Activated T-helper 1 cell treated with anti-CD3 and anti-CD28 coated beads, Interleukin-12 subunit alpha, Interleukin-12 subunit beta, Interleukin-2, Interleukin-4 antibody, amounts not matched to agents 30 ng/mL and 10 ng/mL and 1 ng/mL, durations not matched to agents 14 hours and 24 hours and 36 hours (primary cell): ENCODE measurements at regions of chr17 and their contacts with region 1.

Region 1: DNA sequence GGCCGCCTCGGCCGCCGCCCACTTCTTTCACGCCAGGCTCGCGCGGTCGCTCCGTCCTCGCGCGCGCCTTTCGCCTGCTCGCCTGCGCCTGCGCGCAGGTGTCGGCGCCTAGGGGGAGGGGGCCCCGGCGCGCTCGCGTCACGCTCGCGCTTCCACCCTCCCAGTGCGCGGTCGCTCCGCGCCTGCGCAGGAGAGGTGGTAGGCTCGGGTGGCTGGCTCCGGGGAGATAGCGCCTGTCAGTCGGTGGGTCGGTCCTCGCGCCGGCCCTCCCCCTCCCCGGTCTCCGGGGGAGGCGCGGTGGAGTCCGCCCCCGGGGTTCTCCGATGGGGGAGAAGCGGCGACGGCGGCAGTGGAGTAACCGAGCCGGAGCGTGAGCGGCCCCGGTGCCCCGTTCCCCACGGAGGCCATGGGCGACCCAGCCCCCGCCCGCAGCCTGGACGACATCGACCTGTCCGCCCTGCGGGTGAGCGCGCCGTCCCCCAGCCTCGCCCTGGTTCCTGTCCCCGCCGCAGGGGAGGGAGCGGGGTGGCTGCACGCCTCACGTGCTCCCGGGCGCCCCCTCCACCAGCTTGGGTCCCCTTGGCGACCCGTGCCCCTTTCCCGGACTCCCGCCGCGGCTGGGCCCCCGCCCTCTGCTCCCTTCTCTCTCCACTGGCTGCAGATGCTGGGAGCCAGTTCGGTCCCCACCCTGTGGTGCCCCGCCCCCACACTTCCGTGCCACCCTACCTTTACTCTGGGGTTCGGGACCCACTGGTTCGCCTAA is at the start of gene MINK1:
- DNase-seq: peak; percentile 90
- H3K4me3 Mint-ChIP-seq: peak within 1 kb of the TSS; percentile 93
- H3K27ac Mint-ChIP-seq: peak within 1 kb of the TSS; percentile 99
- H3K4me1 Mint-ChIP-seq: peaks cover 36% of the 10 kb centered on the region
- H3K27me3 Mint-ChIP-seq: no peaks in the 10 kb centered on the region
- total RNA-seq, gene MINK1: 66.5 and 67.5 TPM in 2 replicates

Region 2: GRCh38 chr17:4796553-4796921 is 36.8 kb before region 1 on chr17:
- intact Hi-C with region 1: loop called (anchors 1 kb)
- DNase-seq: no peak
- H3K4me3 Mint-ChIP-seq: peak overlapping the region; percentile 100
- H3K27ac Mint-ChIP-seq: peak overlapping the region; percentile 99
- H3K4me1 Mint-ChIP-seq: peaks cover 7% of the 10 kb centered on the region
- H3K27me3 Mint-ChIP-seq: peaks cover 9% of the 10 kb centered on the region

Region 3: GRCh38 chr17:4806777-4807604 is 26.4 kb before region 1 on chr17 and contains the start of gene PLD2:
- intact Hi-C with region 1: loop called (anchors 1 kb)
- DNase-seq: peak; percentile 89
- H3K4me3 Mint-ChIP-seq: peak within 1 kb of the TSS; percentile 82
- H3K27ac Mint-ChIP-seq: peak within 1 kb of the TSS; percentile 34
- H3K4me1 Mint-ChIP-seq: peaks cover 11% of the 10 kb centered on the region
- H3K27me3 Mint-ChIP-seq: peaks cover 2% of the 10 kb centered on the region
- total RNA-seq, gene PLD2: 16.7 and 22.2 TPM in 2 replicates

Region 4: GRCh38 chr17:4891411-4892342 is 58.3 kb after region 1 on chr17:
- intact Hi-C with region 1: loop called (anchors 5 kb)
- DNase-seq: no peak
- H3K4me3 Mint-ChIP-seq: no peak overlapping the region
- H3K27ac Mint-ChIP-seq: no peak overlapping the region
- H3K4me1 Mint-ChIP-seq: peaks cover 5% of the 10 kb centered on the region
- H3K27me3 Mint-ChIP-seq: no peaks in the 10 kb centered on the region

Region 5: DNA sequence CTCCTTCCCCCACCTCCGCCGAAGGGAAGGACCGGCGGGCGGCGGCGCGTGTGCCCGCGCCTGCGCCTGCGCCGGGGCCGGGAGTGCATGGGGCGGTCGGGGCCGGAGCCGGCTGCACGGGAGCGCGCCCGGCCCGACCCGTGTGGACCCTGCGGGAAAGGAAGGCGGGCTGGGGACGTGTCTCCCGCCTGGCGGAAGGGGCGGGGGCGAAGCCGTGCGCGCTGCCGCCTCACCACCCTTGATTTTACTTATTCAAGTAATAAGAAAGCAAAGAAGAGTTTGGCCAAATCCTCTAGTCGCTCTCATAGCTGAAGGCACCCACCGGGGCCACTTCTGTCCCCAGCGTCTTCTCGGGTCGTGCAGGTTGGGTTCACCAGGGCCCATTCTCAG is 115.6 kb after region 1 on chr17:
- intact Hi-C with region 1: loop called (anchors 5 kb)
- DNase-seq: peak; percentile 77
- H3K4me3 Mint-ChIP-seq: peak overlapping the region; percentile 97
- H3K27ac Mint-ChIP-seq: peak overlapping the region; percentile 100
- H3K4me1 Mint-ChIP-seq: peaks cover 49% of the 10 kb centered on the region
- H3K27me3 Mint-ChIP-seq: peaks cover 2% of the 10 kb centered on the region